Activated CD8-positive, alpha-beta T cell treated with anti-CD3 and anti-CD28 coated beads, Interleukin-2, amount 10 ng/mL, durations not matched to agents 7 days and 5 days (primary cell): ENCODE measurements at regions of chr16 and their contacts with region 1.

Region 1: DNA sequence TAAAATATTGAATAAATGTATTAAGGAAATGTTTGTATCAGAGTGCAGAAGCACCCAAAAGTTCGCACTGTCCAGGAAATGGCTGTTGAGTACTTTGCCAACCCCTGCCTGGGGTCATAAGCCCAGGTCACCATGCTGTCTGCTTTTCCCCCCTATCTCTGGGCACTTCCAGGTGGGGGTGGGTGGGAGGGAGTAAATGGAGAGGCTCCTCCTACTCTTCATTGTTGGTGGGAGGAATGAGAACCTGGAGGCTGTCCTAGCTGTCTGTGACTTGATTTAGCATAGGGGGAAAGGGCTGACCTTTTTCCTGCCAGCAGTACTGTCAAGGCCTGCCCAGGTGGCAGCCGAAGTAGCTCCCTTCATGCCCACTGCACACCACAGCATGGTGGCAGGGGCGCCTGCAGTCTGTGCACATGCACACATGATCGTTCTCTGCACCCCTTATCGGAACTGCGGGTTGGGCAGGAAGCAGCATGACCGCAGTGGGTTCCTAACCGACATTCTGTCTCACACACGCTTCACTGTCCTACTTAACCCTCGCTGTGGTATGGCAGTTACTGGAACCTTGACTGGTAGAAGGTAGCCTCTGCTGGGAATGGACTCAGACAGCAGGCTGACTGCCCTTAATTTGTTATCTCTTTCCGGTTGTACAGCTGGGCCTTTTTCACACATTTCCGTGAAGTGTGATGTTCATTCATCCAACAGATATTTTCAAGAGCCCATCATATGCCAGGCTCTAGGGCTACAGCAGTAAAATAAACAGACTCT is 41.5 kb downstream of the LDHD start:
- DNase-seq: peak; percentile 92
- ATAC-seq: peak; percentile 98
- H3K4me3 Mint-ChIP-seq: peak overlapping the region; percentile 32
- H3K27ac Mint-ChIP-seq: peak overlapping the region; percentile 87
- H3K4me1 Mint-ChIP-seq: peaks cover 46% of the 10 kb centered on the region
- H3K27me3 Mint-ChIP-seq: no peaks in the 10 kb centered on the region

Region 2: DNA sequence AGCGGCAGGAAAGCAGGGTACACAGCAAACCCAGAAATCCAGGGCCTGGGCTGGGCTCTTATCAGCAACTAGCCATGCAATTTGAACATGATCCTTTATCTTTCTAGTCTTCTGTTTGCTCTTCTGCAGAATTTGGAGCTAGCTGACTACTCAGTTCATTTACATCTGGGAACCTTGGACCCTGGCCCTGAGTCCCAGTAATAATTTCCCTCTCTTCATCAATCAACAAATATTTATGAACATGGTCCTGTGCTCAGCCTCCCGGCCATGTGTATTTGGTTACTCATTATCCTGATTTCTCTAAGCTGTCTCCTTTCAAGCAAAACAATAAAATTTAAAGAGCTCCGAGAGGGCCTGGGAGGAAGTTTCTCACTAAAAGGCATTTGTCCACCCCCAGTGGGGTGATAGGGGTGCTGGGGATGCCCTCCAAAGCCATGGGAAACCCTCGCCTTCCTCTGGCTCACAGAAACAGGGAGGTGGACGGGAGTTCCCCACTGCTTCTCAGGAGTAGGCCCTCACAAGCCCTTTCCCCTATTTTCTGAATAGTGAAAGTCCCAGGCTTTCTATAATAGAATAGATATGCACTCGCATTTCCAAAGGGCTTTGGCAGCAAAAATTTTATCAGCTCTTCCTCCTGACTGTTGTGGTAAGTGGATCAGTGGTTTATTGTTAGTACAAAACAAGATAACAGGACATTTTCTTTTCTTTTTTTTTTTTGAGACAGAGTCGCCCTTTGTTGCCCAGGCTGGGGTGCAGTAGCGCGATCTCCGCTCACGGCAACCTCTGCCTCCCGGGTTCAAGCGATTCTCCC is 83.3 kb before region 1 on chr16:
- CTCF ChIA-PET with region 1: no interaction called
- POLR2A ChIA-PET with region 1: no interaction called
- DNase-seq: no peak
- ATAC-seq: no peak
- H3K4me3 Mint-ChIP-seq: no peak overlapping the region
- H3K27ac Mint-ChIP-seq: no peak overlapping the region
- H3K4me1 Mint-ChIP-seq: no peaks in the 10 kb centered on the region
- H3K27me3 Mint-ChIP-seq: peaks cover 15% of the 10 kb centered on the region

Region 3: GRCh38 chr16:75064403-75065148 is 10.5 kb before region 1 on chr16:
- CTCF ChIA-PET with region 1: interaction called, 8 read pairs
- POLR2A ChIA-PET with region 1: interaction called, 13 read pairs
- DNase-seq: peak; percentile 49
- ATAC-seq: peak; percentile 58
- H3K4me3 Mint-ChIP-seq: peak overlapping the region; percentile 64
- H3K27ac Mint-ChIP-seq: peak overlapping the region; percentile 72
- H3K4me1 Mint-ChIP-seq: peaks cover 34% of the 10 kb centered on the region
- H3K27me3 Mint-ChIP-seq: no peaks in the 10 kb centered on the region